ENCODE measurements at regions of chr1 and their contacts with region 1.

Region 1: GRCh38 chr1:20999525-21000244 is 177.0 kb downstream of the EIF4G3 start:
- DNase-seq: no peak
- ATAC-seq: peak; percentile 70
- H3K4me3 ChIP-seq: no peak overlapping the region
- H3K27ac ChIP-seq: peak overlapping the region; percentile 21; the same call in 1 of the 2 replicates
- H3K4me1 ChIP-seq: peaks cover 12% of the 10 kb centered on the region
- H3K27me3 ChIP-seq: no peaks in the 10 kb centered on the region
- CTCF ChIP-seq: no peak
- EP300 ChIP-seq: no peak
- POLR2A ChIP-seq: no peak
- RAD21 ChIP-seq: no peak

Region 2: DNA sequence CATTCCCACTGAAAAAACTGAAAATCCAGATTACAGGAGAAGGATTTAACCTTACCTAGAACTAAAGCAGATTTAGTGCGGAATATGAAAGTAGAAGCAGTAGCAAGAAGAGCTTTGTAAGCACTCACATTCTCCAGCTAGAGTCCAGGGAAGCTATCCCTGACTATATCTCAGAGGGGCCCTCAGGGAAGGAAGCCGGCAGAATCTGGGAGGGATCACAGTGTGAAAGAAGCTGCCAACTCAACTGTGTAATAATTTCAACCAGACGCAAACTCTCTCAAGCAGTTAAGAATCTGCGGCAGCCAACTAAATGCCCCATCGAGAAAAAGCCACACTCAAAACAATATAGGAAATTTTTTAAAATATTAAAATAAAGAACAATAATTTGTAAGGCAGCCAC is 13.3 kb after region 1 on chr1:
- CTCF ChIA-PET with region 1: interaction called, 13 read pairs
- POLR2A ChIA-PET with region 1: no interaction called
- RAD21 ChIA-PET with region 1: no interaction called
- SMC1A ChIA-PET with region 1: interaction called, 6 read pairs
- in situ Hi-C with region 1: no loop called
- intact Hi-C with region 1: no loop called
- DNase-seq: no peak
- ATAC-seq: no peak
- H3K4me3 ChIP-seq: no peak overlapping the region
- H3K27ac ChIP-seq: no peak overlapping the region
- H3K4me1 ChIP-seq: peaks cover 4% of the 10 kb centered on the region; the same call in 1 of the 2 replicates
- H3K27me3 ChIP-seq: no peaks in the 10 kb centered on the region
- CTCF ChIP-seq: no peak
- EP300 ChIP-seq: no peak
- POLR2A ChIP-seq: no peak
- RAD21 ChIP-seq: no peak

Measured in GM12878 (cell line).